ENCODE measurements at regions of chr14 and their contacts with region 1.

Region 1: GRCh38 chr14:51283402-51284085 is 43.5 kb downstream of the TMX1 start:
- DNase-seq: peak; percentile 78 to 81
- ATAC-seq: peak; percentile 86 to 93
- H3K4me3 ChIP-seq: no peak overlapping the region
- H3K27ac ChIP-seq: no peak overlapping the region
- H3K4me1 ChIP-seq: no peaks in the 10 kb centered on the region
- CTCF ChIP-seq: peak; percentile 96
- EP300 ChIP-seq: no peak
- POLR2A ChIP-seq: no peak
- RAD21 ChIP-seq: peak; percentile 94 to 97

Region 2: DNA sequence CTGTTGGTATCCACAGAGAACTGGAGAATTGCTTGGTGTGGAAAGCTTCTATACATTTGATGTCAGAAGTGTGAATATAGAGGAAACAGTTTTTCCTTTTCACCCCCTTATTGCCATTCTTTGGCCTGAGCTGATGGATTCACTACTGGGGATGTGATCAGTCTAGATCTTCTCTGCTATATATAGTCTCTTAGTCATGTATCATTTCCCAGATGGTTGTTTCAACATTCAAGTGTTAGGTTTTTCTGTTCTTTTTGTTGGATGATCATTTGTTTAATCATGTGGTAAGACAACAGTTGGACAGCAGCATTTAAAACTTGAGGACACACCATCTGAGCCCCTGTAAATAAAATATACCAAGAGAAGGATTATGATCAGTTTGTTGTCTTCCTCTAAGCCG is 13.9 kb before region 1 on chr14:
- CTCF ChIA-PET with region 1: interaction called, 45 read pairs
- POLR2A ChIA-PET with region 1: no interaction called
- DNase-seq: no peak
- ATAC-seq: no peak
- H3K4me3 ChIP-seq: no peak overlapping the region
- H3K27ac ChIP-seq: no peak overlapping the region
- H3K4me1 ChIP-seq: no peaks in the 10 kb centered on the region
- CTCF ChIP-seq: no peak
- EP300 ChIP-seq: no peak
- POLR2A ChIP-seq: no peak
- RAD21 ChIP-seq: no peak

Region 3: GRCh38 chr14:51395361-51395849 is 111.9 kb after region 1 on chr14:
- CTCF ChIA-PET with region 1: interaction called, 13 read pairs
- POLR2A ChIA-PET with region 1: no interaction called
- DNase-seq: peak in 1 of 2 experiments; percentile 22
- ATAC-seq: peak in 1 of 2 experiments; percentile 4; a peak in 2 of 6 replicates
- H3K4me3 ChIP-seq: no peak overlapping the region
- H3K27ac ChIP-seq: peak overlapping the region; percentile 84 to 88
- H3K4me1 ChIP-seq: peaks cover 53% of the 10 kb centered on the region
- CTCF ChIP-seq: no peak
- EP300 ChIP-seq: no peak
- POLR2A ChIP-seq: no peak
- RAD21 ChIP-seq: no peak

Region 4: DNA sequence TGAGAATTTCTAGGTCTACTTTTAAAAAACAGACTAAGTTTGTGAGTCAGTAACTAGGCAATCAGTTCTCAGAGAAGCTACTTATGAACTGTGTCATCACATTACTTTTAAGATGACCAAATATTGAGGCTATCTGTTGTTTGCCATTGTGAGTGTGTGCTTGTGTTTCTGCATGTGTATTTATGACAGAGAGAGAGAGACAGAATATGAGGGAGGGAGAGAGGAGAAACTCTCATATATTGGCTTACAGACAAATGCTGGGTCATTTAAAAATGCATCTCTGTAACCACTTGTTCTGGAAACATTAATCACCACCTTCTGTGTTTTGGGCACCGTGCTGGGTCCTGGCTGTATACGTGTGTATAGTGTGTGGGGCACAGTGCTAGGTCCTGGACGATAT is 206.7 kb after region 1 on chr14:
- CTCF ChIA-PET with region 1: no interaction called
- POLR2A ChIA-PET with region 1: no interaction called
- DNase-seq: peak in 1 of 2 experiments; percentile 28
- ATAC-seq: no peak
- H3K4me3 ChIP-seq: no peak overlapping the region
- H3K27ac ChIP-seq: no peak overlapping the region
- H3K4me1 ChIP-seq: 0 out of 3 replicates have a peak, but pooled peaks cover 4% of the 10 kb centered on the region
- CTCF ChIP-seq: no peak
- EP300 ChIP-seq: no peak
- POLR2A ChIP-seq: no peak
- RAD21 ChIP-seq: no peak

Region 5: DNA sequence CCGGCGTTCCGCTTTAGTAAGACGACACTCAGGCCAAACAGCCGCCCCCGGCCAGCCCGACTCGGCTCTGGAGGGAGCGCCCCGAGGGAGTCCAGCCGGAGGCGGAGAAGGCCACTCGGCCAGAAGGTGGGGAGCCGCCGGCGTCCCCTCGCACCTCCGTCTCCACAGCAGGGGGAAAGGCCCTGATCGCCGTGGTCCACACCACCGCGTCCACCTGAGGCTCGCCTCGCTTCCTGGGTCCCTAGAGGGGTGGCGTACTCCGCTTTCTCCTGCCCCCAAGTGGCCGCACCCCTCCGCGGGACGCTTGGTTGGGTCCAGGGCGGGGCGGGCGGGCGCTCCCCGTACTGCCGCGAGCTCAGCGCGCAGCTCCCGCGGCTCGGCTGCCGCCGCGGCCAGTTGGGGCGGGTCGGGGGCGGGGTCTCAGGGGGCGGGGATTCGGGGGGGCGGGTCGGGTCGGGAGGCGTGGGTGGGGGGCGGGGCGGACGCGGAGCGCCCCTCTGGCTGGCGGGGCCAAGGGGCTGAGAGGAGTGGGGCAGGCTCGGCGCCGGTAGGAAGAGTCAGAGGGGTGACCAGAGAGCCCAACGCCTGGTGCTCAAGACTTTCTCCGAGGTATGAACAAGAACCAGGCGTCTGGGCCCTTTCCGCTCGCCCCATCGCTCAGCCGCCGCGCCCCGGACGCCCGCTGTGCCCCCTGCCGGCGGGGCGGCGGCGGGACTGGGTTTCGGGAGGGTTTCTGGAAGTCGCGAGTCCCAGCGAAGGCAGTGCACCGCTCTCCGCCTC is 368.0 kb after region 1 on chr14 and contains the start of gene FRMD6:
- CTCF ChIA-PET with region 1: interaction called, 46 read pairs
- POLR2A ChIA-PET with region 1: interaction called, 6 read pairs
- DNase-seq: peak; percentile 69 to 89
- ATAC-seq: peak; percentile 84 to 85
- H3K4me3 ChIP-seq: peak within 1 kb of the TSS; percentile 52
- H3K27ac ChIP-seq: peak within 1 kb of the TSS; percentile 96 to 97
- H3K4me1 ChIP-seq: peaks cover 43% of the 10 kb centered on the region
- CTCF ChIP-seq: peak; percentile 72
- EP300 ChIP-seq: no peak
- POLR2A ChIP-seq: peak; percentile 72
- RAD21 ChIP-seq: peak; percentile 32 to 63
- polyA plus RNA-seq, gene FRMD6: 23.1 and 23.5 TPM in 2 replicates

Region 6: DNA sequence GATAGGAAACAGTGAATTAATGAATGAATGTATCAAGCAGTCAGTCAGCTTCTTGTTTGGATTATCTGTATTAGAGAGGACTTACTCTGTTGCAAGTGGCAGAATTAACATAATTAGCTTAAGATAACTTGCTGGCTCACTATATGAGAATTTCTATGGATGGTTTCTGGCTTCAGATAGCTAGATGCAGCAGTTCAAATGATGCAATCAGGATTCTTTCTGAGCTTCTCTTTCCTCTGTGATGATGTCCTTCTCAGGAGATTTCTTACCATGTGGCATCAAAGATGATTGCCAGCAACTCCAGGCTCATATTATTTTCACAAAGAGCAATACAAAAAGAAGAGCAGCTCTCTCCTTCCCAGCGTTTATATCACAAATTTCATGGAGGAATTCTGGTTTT is 398.9 kb after region 1 on chr14:
- CTCF ChIA-PET with region 1: interaction called, 13 read pairs
- POLR2A ChIA-PET with region 1: no interaction called
- DNase-seq: no peak
- ATAC-seq: no peak
- H3K4me3 ChIP-seq: no peak overlapping the region
- H3K27ac ChIP-seq: no peak overlapping the region
- H3K4me1 ChIP-seq: peaks cover 11% of the 10 kb centered on the region
- CTCF ChIP-seq: no peak
- EP300 ChIP-seq: no peak
- POLR2A ChIP-seq: no peak
- RAD21 ChIP-seq: no peak

Measured in A549 (cell line).